Head of caudate nucleus (tissue), 42 donors: ENCODE measurements at regions of chr13 and their contacts with region 1.

Region 1: GRCh38 chr13:24220086-24220703 is 59.7 kb downstream of the SPATA13 start:
- DNase-seq: peak in 22 of 42 donors; percentile 47 to 90 (median 76)

Region 2: DNA sequence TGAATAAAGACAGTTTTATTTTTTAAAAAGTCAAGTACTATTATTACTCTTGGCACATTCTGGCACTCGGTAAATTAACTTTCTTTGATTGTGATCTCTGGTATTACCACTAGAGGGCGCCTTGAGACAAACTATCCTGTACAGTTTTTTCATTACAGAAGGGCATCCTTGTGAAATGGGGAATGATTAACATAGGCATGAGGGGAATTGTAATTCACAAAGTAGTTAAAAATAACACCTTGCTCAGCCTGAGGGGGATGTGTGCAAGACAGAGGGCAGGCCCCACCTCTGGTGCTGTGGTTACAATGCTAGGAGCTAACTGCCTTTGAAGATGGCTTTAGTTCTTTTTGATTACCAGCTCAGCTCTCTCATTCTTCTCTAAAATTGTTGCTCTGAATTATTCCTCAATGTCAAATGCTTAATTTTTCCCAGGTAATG is 298.7 kb before region 1 on chr13:
- intact Hi-C with region 1: loop called (anchors 10 kb)
- DNase-seq: peak in 16 of 42 donors; percentile 20 to 79 (median 40)

Region 3: GRCh38 chr13:24012648-24013047 is 207.5 kb before region 1 on chr13:
- intact Hi-C with region 1: loop called (anchors 10 kb)
- DNase-seq: peak in 5 of 42 donors; percentile 33 to 59 (median 47)

Region 4: GRCh38 chr13:24033527-24034302 is 186.5 kb before region 1 on chr13:
- intact Hi-C with region 1: no loop called
- DNase-seq: peak in 1 of 42 donors; percentile 38

Region 5: DNA sequence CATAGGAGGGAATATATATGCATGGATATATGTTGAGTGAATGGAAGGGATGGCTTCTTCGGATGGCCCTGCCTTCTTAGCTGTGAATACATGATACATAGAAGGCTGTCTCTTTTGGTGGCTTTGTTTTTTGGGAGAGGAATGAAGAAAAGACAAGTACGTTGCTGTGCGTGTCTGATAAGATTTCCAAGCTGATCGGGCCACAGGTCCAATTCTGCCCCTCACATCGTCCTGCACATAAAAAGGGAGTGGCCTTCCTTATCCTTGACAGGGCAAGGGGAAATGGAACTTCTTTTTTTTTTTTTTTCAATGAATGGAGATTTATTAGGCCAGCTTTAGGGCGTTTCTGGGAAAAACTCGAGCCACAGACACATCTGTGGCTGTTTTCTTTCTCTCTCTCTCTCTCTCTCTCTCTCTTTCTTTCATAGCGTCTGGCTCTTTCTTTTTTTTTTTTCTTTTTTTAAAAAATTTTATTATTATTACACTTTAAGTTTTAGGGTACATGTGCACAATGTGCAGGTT is 163.5 kb before region 1 on chr13:
- intact Hi-C with region 1: loop called (anchors 5 kb)
- DNase-seq: no peak

Region 6: DNA sequence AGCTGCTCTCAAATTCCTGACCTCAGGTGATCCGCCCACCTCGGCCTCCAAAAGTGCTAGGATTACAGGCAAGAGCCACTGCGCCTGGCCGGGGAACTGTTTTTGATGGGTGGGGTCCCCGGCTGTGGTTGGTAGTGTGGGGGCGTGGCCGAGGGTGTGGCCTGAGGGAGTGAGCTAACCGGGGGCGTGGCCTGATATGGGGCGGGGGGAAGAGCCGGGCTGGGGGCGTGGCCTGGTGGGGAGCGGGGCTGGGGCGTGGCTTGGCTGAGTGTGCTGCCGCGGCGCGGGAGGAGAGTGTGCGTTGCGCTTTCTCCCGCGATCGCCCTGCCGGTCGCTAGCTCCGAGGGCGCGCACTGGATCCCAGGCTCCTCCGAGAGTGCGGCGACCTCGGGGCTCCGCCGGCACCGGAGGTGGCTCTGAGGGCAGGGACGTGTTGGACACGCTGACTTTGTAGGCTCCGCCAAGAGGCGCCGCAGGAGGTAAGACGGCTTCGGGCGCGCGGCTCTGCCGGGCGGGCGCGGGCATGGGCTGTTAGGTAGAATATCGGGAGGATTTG is 59.7 kb before region 1 on chr13 and contains the start of gene SPATA13:
- intact Hi-C with region 1: loop called (anchors 10 kb)
- DNase-seq: peak; percentile 89 to 99 (median 97)

Region 7: GRCh38 chr13:24299488-24300114 is 79.4 kb after region 1 on chr13:
- intact Hi-C with region 1: no loop called
- DNase-seq: no peak

Region 8: DNA sequence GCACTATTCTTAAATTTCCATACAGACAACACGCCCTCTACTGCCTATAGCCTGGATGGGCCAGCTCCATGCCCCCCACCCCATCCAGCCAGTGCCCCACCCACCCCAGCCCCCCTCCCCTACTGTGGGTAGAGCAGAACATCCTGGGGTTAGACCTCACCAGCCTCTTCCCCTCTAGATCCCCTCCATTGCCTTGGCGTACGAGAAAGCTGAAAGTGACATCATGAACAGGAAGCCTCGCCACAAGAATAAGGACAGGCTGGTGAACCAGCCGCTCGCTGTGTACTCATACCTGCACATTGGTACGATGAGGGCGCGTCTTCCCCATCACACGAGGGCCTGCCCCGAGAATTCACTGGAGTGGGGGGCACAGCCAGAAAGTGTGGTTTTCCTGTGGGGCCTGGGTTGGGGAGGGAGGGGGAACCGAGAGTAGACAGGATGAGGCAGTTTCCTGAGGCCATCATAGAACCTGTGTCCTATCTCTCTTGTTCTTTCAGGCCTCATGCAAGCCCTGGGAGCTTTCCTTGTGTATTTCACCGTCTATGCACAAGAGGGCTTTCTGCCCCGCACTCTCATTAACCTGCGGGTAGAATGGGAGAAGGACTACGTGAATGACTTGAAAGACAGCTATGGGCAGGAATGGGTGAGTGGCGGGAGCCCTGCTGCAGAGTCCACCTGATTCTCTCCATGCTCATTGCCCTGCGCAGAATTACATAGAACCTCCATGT is 489.2 kb after region 1 on chr13:
- intact Hi-C with region 1: no loop called
- DNase-seq: no peak